ENCODE measurements at regions of chr17 and their contacts with region 1.

Region 1: GRCh38 chr17:82648166-82648668 is at the start of gene WDR45B:
- DNase-seq: peak; percentile 97 to 99
- ATAC-seq: peak; percentile 97
- H3K4me3 ChIP-seq: peak within 1 kb of the TSS; percentile 46 to 85
- H3K27ac ChIP-seq: peak within 1 kb of the TSS; percentile 55 to 62
- H3K4me1 ChIP-seq: no peaks in the 10 kb centered on the region
- H3K27me3 ChIP-seq: no peaks in the 10 kb centered on the region
- total RNA-seq, gene WDR45B: 60.4 to 75.4 TPM

Region 2: DNA sequence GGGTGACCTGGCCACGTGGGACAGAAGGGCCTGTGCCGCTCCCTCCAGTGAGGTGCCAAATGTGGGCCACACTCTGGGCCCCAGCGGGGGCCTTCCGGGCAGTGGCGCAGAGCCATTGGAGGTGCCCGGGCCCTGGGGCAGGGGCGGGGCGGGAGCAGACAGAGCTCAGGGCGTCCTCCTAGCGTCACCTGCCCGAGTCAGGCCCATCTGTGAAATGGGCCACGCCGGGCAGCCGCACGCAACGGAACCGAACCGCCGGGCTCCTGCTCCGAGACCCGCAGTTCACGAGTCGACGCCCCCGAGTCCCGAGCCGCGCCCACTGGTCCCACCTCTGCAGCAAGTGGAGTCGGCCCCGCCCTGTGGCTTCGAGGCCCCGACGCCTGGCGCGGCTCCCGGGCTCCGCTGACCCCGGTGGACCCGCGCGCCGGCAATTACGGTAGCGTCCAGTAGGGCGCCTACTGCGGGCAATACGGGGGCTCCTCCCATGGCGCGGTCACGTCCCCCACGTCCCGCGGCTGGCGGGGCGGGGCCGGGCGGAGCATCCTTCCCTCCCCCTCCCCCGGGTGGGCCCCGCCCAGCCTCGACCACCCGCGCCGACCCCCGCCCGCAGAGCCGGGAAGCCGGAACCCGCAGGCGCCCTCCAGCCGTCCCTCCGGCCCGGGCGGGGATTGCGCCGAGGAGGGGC is 417.4 kb before region 1 on chr17:
- intact Hi-C with region 1: no loop called
- DNase-seq: peak; percentile 95
- ATAC-seq: peak; percentile 80
- H3K4me3 ChIP-seq: peak overlapping the region; percentile 8 to 51
- H3K27ac ChIP-seq: peak overlapping the region in 1 of 2 donors; percentile 59
- H3K4me1 ChIP-seq: no peaks in the 10 kb centered on the region
- H3K27me3 ChIP-seq: peaks cover 0 to 3% of the 10 kb centered on the region in 2 donors

Region 3: DNA sequence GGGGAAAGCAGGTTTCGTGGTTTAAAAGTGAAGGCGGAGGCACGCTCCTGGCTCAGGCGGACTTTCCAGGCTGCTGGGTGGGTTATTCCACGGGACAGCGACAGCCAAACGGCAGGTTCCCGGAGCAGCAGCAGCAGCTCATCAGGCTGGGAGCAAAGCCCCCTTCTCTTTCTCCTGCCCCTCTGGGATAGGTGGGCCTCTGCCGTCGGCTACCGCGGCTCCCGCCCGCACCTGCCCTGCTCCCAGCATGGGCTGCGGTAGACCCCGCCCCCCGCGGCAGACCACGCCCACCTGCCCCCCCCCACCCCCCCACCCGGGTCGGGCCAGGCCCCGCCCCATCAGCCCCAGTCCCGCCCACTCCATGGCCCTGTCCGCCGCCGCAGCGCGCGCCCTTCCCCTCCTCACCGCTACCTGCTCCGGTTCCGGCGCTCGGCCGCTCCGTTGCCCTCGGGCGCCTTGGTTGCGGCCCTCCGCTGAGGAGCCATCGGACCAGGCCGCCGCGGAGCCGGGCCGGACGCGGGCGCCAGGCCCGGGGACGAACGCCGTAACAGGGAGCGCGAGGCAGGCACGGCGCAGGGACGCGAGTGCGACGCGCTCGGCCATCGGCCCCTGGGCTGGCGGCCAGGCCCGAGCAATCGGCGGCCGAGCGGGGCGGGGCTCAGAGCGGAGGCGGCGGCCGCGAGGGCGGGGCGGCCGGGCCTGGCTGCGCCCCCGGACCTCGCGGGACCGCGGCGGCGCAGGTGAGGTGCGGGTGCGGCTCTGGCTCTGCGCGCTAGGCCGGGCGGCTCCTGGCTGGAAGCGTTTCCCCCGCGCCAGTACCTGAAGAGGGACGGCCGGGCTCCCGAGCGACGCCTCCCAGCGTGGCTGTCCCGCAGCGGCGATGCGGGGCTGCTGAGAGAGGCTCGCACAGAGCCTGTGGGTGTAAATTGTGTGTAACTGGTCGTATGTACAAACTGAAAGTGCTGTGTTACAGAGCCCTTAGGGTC is 229.9 kb before region 1 on chr17 and contains the starts of genes HEXD and OGFOD3:
- intact Hi-C with region 1: loop called in 1 of 2 experiments (anchors 2 kb)
- DNase-seq: peak; percentile 86 to 93
- ATAC-seq: peak; percentile 93
- H3K4me3 ChIP-seq: peak within 1 kb of the TSS; percentile 59 to 85
- H3K27ac ChIP-seq: peak within 1 kb of the TSS in 1 of 2 donors; percentile 74
- H3K4me1 ChIP-seq: no peaks in the 10 kb centered on the region
- H3K27me3 ChIP-seq: no peaks in the 10 kb centered on the region
- total RNA-seq, gene HEXD: 14.8 to 34.7 TPM
- total RNA-seq, gene OGFOD3: 17.5 to 22.2 TPM

Region 4: GRCh38 chr17:82592767-82593589 is 55.2 kb before region 1 on chr17:
- intact Hi-C with region 1: loop called in 1 of 2 experiments (anchors 5 kb)
- DNase-seq: peak in 1 of 2 donors; percentile 82
- ATAC-seq: peak; percentile 59
- H3K4me3 ChIP-seq: peak overlapping the region; percentile 28 to 72
- H3K27ac ChIP-seq: peak overlapping the region; percentile 20 to 72
- H3K4me1 ChIP-seq: no peaks in the 10 kb centered on the region
- H3K27me3 ChIP-seq: no peaks in the 10 kb centered on the region

Region 5: DNA sequence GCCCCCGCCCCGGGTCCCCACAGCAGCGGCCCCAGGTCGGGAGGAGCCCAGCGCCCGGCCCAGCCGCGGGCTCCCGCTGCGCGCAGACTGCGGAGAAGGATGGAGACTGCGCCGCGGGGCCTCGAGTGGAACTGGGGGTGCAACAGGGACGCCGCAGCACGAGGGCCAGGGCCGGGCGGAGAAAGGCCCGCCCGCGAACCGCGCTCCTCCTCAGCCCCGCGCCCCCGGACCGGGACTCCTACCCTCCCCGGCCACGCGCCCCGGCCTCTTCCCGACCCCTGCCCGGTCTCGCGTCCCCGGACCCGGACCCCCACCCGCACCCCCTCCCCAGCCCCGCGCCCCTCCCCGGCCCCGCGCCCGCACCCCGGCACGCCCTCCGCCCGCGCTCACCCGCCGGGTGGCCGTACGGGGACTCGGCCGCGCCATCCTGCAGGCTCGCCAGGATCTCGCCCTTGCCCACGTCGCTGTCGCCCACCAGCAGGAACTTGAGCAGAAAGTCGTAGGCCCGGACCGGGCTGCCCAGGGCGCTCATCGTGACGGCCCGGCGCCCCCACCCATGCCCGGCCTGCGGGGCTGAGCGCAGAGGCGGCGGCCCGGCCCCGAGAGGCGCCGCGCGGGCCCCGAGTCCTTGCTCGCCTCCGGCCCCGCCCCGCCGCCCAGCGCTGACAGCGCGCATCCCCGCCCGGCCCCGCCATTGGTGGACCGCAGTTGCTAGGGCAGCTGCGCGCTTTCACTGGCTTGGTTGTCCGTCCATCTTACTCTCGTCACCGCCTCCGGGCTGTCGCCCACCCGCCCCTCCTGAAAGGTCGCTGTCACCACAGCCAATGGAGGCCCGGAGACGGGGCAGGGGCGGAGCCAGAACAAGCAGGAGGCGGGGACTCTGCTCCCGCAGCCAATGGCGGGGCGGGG is 50.1 kb after region 1 on chr17 and contains the start of gene RAB40B:
- intact Hi-C with region 1: loop called in 1 of 2 experiments (anchors 2 kb)
- DNase-seq: peak; percentile 99 to 100
- ATAC-seq: peak; percentile 98
- H3K4me3 ChIP-seq: peak within 1 kb of the TSS; percentile 92 to 93
- H3K27ac ChIP-seq: no peak within 1 kb of the TSS
- H3K4me1 ChIP-seq: no peaks in the 10 kb centered on the region
- H3K27me3 ChIP-seq: no peaks in the 10 kb centered on the region
- total RNA-seq, gene RAB40B: 4.5 to 10.7 TPM